CD8-positive, alpha-beta T cell (primary cell): ENCODE measurements at regions of chr2 and their contacts with region 1.

Region 1: GRCh38 chr2:141618457-141618856 is 512.4 kb downstream of the LRP1B start:
- DNase-seq: no peak
- ATAC-seq: no peak
- H3K4me3 ChIP-seq: no peak overlapping the region
- H3K4me3 Mint-ChIP-seq: no peak overlapping the region
- H3K27ac ChIP-seq: no peak overlapping the region
- H3K27ac Mint-ChIP-seq: no peak overlapping the region
- H3K4me1 ChIP-seq: no peaks in the 10 kb centered on the region
- H3K4me1 Mint-ChIP-seq: no peaks in the 10 kb centered on the region
- H3K27me3 ChIP-seq: no peaks in the 10 kb centered on the region
- H3K27me3 Mint-ChIP-seq: no peaks in the 10 kb centered on the region
- CTCF ChIP-seq: no peak

Region 2: DNA sequence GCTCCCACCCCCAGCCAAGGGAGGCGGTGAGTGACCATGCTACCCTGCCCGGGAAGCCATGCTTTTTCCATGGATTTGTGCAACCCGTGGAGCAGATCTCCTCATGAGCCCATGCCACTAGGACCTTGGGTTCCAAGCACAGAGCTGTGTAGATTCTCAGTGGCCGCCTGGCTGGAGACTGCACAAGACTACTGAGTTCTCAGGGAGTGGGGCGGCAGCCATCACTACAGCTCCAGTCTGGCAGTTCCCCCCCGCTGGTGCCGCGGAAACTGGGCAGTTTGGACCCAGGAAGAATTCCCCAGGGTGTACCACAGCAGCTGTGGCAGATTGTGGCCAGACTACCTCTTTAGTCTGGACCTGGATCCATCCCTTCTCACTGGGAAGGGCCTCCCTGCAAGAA is 41.8 kb after region 1 on chr2:
- CTCF ChIA-PET with region 1: no interaction called
- POLR2A ChIA-PET with region 1: no interaction called
- intact Hi-C with region 1: loop called in 1 of 2 experiments (anchors 2 kb)
- DNase-seq: no peak
- ATAC-seq: no peak
- H3K4me3 ChIP-seq: no peak overlapping the region
- H3K4me3 Mint-ChIP-seq: no peak overlapping the region
- H3K27ac ChIP-seq: no peak overlapping the region
- H3K27ac Mint-ChIP-seq: no peak overlapping the region
- H3K4me1 ChIP-seq: no peaks in the 10 kb centered on the region
- H3K4me1 Mint-ChIP-seq: no peaks in the 10 kb centered on the region
- H3K27me3 ChIP-seq: no peaks in the 10 kb centered on the region
- H3K27me3 Mint-ChIP-seq: no peaks in the 10 kb centered on the region
- CTCF ChIP-seq: no peak